Activated CD8-positive, alpha-beta T cell treated with anti-CD3 and anti-CD28 coated beads for 36 hours (primary cell): ENCODE measurements at regions of chr1 and their contacts with region 1.

Region 1: DNA sequence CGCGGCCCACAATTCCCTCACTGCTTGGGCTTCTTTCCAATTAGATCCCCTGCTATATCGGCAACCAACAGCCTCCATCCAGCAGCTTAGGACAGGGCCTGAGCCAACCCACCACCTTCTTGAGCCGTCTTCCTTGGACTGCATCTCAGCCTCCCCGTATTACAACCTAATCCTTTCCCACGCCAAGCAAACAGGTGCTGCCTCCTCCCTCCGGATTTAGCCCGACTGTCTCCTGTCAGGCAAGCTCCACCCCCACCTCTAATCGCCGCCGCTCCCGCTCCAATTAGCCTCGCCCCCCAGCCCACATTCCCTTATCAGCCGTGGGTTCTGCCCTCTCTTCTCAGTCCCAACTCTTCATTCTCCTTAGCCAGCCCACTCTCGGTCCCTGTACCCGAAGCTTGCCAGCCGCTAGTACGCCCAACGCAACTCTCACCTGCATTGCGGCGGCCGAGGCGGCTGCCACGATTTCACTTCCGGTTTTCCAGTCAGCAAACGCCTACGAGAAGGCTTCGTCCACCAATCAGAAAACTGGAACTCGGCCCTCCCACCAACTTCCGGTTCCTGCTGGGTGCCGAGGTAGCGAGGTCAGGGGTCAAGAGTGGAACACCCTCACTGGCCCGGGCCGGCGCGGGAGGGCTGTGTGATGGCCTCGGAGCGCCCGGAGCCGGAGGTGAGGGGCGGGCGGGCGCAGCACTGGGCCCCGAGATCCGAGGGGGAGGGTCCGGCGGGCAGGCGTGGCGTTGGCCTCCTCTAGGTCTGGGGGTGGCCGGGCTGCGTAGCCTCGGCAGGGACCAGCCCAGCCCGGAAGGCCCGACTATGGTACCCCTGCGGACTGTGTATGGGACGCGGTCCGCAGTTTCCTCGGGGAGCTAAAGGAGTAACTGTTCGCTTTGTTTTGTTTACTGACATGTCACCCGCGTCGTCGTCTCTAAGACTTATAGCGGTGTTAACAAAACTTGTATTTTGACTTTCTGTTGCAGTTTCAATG is at the starts of genes MED8 and SZT2:
- DNase-seq: peak; percentile 95
- ATAC-seq: peak; percentile 98
- H3K4me3 Mint-ChIP-seq: peak within 1 kb of the TSS; percentile 95
- H3K27ac Mint-ChIP-seq: peak within 1 kb of the TSS; percentile 96
- H3K4me1 Mint-ChIP-seq: peaks cover 34% of the 10 kb centered on the region
- H3K27me3 Mint-ChIP-seq: no peaks in the 10 kb centered on the region
- CTCF ChIP-seq: no peak
- total RNA-seq, gene MED8: 33.5 to 34.5 TPM
- total RNA-seq, gene SZT2: 30.1 to 33.3 TPM

Region 2: GRCh38 chr1:43008115-43009060 is 381.2 kb before region 1 on chr1:
- CTCF ChIA-PET with region 1: no interaction called
- POLR2A ChIA-PET with region 1: no interaction called
- intact Hi-C with region 1: no loop called
- DNase-seq: no peak
- ATAC-seq: no peak
- H3K4me3 Mint-ChIP-seq: no peak overlapping the region
- H3K27ac Mint-ChIP-seq: no peak overlapping the region
- H3K4me1 Mint-ChIP-seq: no peaks in the 10 kb centered on the region
- H3K27me3 Mint-ChIP-seq: no peaks in the 10 kb centered on the region
- CTCF ChIP-seq: no peak

Region 3: GRCh38 chr1:43358746-43359693 is 30.6 kb before region 1 on chr1 and contains the start of gene CDC20:
- CTCF ChIA-PET with region 1: interaction called, 10 read pairs
- POLR2A ChIA-PET with region 1: interaction called, 4 read pairs
- intact Hi-C with region 1: no loop called
- DNase-seq: peak; percentile 99
- ATAC-seq: peak; percentile 98
- H3K4me3 Mint-ChIP-seq: peak within 1 kb of the TSS; percentile 95
- H3K27ac Mint-ChIP-seq: peak within 1 kb of the TSS; percentile 87
- H3K4me1 Mint-ChIP-seq: peaks cover 32% of the 10 kb centered on the region
- H3K27me3 Mint-ChIP-seq: no peaks in the 10 kb centered on the region
- CTCF ChIP-seq: no peak
- total RNA-seq, gene CDC20: 160 to 167 TPM

Region 4: GRCh38 chr1:43367904-43368645 is 21.5 kb before region 1 on chr1 and contains the start of gene ELOVL1:
- CTCF ChIA-PET with region 1: interaction called, 3 read pairs
- POLR2A ChIA-PET with region 1: interaction called, 29 read pairs
- intact Hi-C with region 1: no loop called
- DNase-seq: peak; percentile 93
- ATAC-seq: peak; percentile 86
- H3K4me3 Mint-ChIP-seq: peak within 1 kb of the TSS; percentile 95
- H3K27ac Mint-ChIP-seq: peak within 1 kb of the TSS; percentile 89
- H3K4me1 Mint-ChIP-seq: peaks cover 26% of the 10 kb centered on the region
- H3K27me3 Mint-ChIP-seq: no peaks in the 10 kb centered on the region
- CTCF ChIP-seq: no peak
- total RNA-seq, gene ELOVL1: 45.4 to 49.2 TPM